ENCODE measurements at regions of chr16 and their contacts with region 1.

Region 1: DNA sequence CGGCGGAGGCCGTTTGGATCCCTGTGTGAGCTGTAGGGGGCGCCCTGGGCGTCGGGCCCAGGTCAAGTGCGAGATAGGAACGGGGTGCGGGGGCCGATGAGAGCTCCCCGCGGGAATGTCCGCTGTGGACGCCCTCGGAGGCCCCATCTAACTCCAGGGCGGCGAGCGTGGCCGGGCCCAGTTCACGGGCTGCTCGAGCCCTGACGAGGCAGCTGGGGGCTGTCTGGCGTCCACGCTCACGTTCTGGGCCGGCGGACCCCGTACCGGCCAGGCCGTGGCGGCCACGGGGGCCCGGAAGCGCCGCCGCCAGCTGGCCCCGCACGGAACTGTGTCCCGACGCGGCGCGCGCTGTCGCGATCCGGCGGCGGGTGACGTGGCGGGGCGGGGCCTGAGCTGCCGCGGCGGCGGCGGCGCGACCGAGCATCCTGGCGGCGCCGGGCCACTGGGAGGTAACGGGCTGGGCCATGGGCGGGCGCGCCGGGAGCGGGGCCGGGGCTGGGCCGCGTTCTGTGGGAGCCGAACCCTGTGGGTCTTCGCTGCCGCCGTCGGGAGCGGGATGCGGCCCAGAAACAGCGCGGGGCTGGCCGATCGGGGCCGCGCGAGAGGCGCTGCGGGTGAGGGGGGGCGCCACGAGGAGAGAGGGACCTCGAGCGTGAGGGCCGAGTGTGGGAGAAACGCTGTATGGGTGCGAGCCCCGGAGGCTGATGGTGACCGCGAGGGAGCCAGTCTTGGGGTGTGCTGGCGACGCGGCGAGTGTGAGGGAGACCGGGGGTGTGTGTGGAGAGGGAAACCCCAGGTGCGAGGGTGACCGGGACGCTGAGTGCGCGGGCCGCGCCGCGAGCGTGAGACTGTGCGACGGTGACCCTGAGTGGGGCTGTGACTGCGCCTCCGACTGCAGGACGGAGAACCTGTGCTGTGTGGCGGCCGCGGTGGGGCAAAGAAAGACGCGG is at the start of gene SLC7A6:
- DNase-seq: peak in 1 of 2 experiments; percentile 86
- H3K4me3 ChIP-seq: peak within 1 kb of the TSS; percentile 78 to 97 (median 84)
- H3K27ac ChIP-seq: no peak within 1 kb of the TSS
- H3K4me1 ChIP-seq: peaks cover 0 to 3% (median 2%) of the 10 kb centered on the region in 4 experiments; a peak in 5 of 7 replicates
- H3K27me3 ChIP-seq: peaks cover 0 to 11% (median 1%) of the 10 kb centered on the region in 4 experiments; a peak in 3 of 7 replicates
- CTCF ChIP-seq: peak; percentile 61 to 69 (median 69)
- EP300 ChIP-seq: no peak
- POLR2A ChIP-seq: no peak; a peak in 1 of 3 replicates
- RAD21 ChIP-seq: peak in 1 of 2 experiments; percentile 41; a peak in 2 of 4 replicates
- total RNA-seq, gene SLC7A6: 29.2 and 37.8 TPM in 2 replicates

Region 2: GRCh38 chr16:67910158-67910557 is 354.2 kb before region 1 on chr16:
- CTCF ChIA-PET with region 1: no interaction called
- POLR2A ChIA-PET with region 1: no interaction called
- DNase-seq: no peak
- H3K4me3 ChIP-seq: no peak overlapping the region
- H3K27ac ChIP-seq: no peak overlapping the region
- H3K4me1 ChIP-seq: peaks cover 0 to 6% (median 3%) of the 10 kb centered on the region in 4 experiments; a peak in 4 of 7 replicates
- H3K27me3 ChIP-seq: no peaks in the 10 kb centered on the region
- CTCF ChIP-seq: no peak
- EP300 ChIP-seq: no peak
- POLR2A ChIP-seq: no peak
- RAD21 ChIP-seq: no peak

Region 3: GRCh38 chr16:68244903-68245853 is 19.2 kb before region 1 on chr16 and contains the start of gene PLA2G15:
- CTCF ChIA-PET with region 1: interaction called, 108 read pairs
- POLR2A ChIA-PET with region 1: interaction called, 10 read pairs
- DNase-seq: peak; percentile 70 to 98
- H3K4me3 ChIP-seq: peak within 1 kb of the TSS; percentile 86 to 94 (median 90)
- H3K27ac ChIP-seq: no peak within 1 kb of the TSS
- H3K4me1 ChIP-seq: peaks cover 0 to 5% (median 3%) of the 10 kb centered on the region in 4 experiments; a peak in 5 of 7 replicates
- H3K27me3 ChIP-seq: peaks cover 0 to 8% (median 5%) of the 10 kb centered on the region in 4 experiments; a peak in 5 of 7 replicates
- CTCF ChIP-seq: no peak
- EP300 ChIP-seq: no peak
- POLR2A ChIP-seq: peak in 1 of 2 experiments; percentile 34; a peak in 1 of 3 replicates
- RAD21 ChIP-seq: no peak
- total RNA-seq, gene PLA2G15: 10.0 and 11.2 TPM in 2 replicates

Region 4: GRCh38 chr16:68275611-68276191 is 11.3 kb after region 1 on chr16:
- CTCF ChIA-PET with region 1: interaction called, 233 read pairs
- POLR2A ChIA-PET with region 1: interaction called, 9 read pairs
- DNase-seq: no peak
- H3K4me3 ChIP-seq: no peak overlapping the region
- H3K27ac ChIP-seq: no peak overlapping the region
- H3K4me1 ChIP-seq: no peaks in the 10 kb centered on the region
- H3K27me3 ChIP-seq: no peaks in the 10 kb centered on the region
- CTCF ChIP-seq: no peak
- EP300 ChIP-seq: no peak
- POLR2A ChIP-seq: no peak
- RAD21 ChIP-seq: no peak

Region 5: GRCh38 chr16:68298907-68299561 is 34.6 kb after region 1 on chr16:
- CTCF ChIA-PET with region 1: interaction called, 233 read pairs
- POLR2A ChIA-PET with region 1: interaction called, 3 read pairs
- DNase-seq: no peak
- H3K4me3 ChIP-seq: no peak overlapping the region
- H3K27ac ChIP-seq: no peak overlapping the region
- H3K4me1 ChIP-seq: no peaks in the 10 kb centered on the region
- H3K27me3 ChIP-seq: no peaks in the 10 kb centered on the region
- CTCF ChIP-seq: no peak
- EP300 ChIP-seq: no peak
- POLR2A ChIP-seq: no peak
- RAD21 ChIP-seq: no peak

Region 6: DNA sequence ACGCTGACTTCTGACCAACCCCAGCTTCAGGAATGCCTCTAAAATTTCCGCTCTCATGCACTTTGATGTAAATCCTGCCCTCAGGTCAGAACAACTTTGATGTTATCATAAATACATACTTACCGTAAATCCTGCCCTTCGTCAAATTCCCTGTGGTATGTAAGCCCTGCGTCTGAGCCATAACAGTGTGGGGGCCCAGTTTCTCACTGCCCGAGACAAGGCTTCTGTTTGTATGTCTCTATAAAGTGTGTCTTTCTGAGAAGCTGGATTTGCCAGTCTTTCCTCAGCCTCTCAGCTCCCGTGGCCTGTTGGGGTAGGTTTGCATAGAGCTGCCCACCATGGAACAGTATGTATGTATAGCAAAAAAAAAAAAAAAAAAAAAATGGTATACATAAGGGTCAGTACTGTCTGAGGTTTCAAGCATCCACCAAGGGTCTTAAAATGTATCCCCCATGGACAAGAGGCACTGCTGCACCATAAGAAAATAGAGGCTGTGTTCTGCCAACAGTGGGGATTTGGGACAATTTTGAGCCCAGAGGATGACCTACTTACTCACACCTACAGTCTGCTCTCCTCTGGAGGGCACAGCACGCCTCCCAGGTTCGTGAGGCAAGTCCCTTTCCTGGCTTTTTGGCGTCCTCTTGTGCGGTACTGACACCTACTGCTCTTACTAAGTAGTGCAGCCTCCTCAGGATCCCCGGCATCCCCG is 63.9 kb after region 1 on chr16:
- CTCF ChIA-PET with region 1: interaction called, 221 read pairs
- POLR2A ChIA-PET with region 1: interaction called, 8 read pairs
- DNase-seq: peak; percentile 69 to 90
- H3K4me3 ChIP-seq: no peak overlapping the region
- H3K27ac ChIP-seq: no peak overlapping the region
- H3K4me1 ChIP-seq: peaks cover 0 to 4% (median 1%) of the 10 kb centered on the region in 4 experiments; a peak in 2 of 7 replicates
- H3K27me3 ChIP-seq: no peaks in the 10 kb centered on the region
- CTCF ChIP-seq: peak; percentile 86 to 96 (median 94)
- EP300 ChIP-seq: no peak
- POLR2A ChIP-seq: no peak
- RAD21 ChIP-seq: peak; percentile 95

Measured in H1 (cell line).